Prostate gland (tissue), 2 donors: ENCODE measurements at regions of chr10 and their contacts with region 1.

Region 1: GRCh38 chr10:103416436-103417147 is 20.2 kb downstream of the PDCD11 start:
- DNase-seq: peak; percentile 62
- H3K4me3 ChIP-seq: no peak overlapping the region
- H3K27ac ChIP-seq: no peak overlapping the region
- H3K4me1 ChIP-seq: no peaks in the 10 kb centered on the region
- H3K27me3 ChIP-seq: no peaks in the 10 kb centered on the region
- CTCF ChIP-seq: peak in 3 of 4 experiments; percentile 65 to 74 (median 73)
- POLR2A ChIP-seq: no peak

Region 2: DNA sequence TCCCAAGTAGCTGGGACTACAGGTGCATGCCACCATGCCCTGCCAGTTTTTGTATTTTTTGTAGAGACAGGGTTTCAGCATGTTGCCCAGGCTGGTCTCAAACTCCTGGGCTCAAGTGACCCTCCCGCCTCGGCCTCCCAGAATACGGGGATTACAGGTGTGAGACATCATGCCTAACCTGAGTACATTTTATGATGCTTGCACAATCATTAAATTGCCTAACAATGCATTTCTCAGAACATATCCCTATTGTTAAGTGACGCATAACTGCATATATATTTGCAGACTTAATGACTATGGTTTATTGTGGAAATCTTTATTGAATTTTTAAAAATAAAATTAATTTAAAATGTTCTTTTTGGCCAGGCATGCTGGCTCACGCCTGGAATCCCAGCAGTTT is 109.0 kb before region 1 on chr10:
- intact Hi-C with region 1: no loop called
- DNase-seq: no peak
- H3K4me3 ChIP-seq: no peak overlapping the region
- H3K27ac ChIP-seq: no peak overlapping the region
- H3K4me1 ChIP-seq: no peaks in the 10 kb centered on the region
- H3K27me3 ChIP-seq: no peaks in the 10 kb centered on the region
- CTCF ChIP-seq: no peak
- POLR2A ChIP-seq: no peak

Region 3: DNA sequence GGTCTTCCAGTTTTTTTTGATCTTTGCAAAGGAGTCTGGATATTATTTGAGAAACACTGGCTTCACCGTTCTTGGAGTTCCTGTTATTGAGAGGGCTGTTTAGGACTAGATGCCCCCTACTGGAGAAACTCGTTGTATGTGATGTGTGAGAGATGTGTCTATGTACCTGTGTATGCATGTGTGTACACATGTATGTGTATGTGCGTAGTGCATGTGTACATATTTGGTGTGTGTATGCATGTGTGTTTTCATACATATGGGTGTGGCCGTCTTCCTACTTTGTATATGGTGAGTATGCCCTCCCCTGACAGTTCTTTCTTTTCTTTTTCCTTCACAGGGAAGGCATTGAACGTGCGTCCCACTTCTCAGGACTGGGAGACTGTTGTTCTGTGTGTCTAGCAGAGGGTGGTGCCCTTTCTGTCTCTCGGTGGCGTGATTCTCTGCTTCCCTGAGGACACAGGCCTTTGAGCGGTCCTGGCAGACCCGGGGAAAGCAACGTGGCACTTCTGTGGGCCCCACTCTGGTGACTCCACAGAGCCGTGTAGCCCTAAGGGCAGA is 65.5 kb after region 1 on chr10:
- intact Hi-C with region 1: loop called (anchors 1 kb)
- DNase-seq: peak; percentile 36
- H3K4me3 ChIP-seq: no peak overlapping the region
- H3K27ac ChIP-seq: no peak overlapping the region
- H3K4me1 ChIP-seq: no peaks in the 10 kb centered on the region
- H3K27me3 ChIP-seq: no peaks in the 10 kb centered on the region
- CTCF ChIP-seq: peak in 3 of 4 experiments; percentile 35 to 59 (median 47)
- POLR2A ChIP-seq: no peak

Region 4: GRCh38 chr10:103534581-103535508 is 118.3 kb after region 1 on chr10:
- intact Hi-C with region 1: no loop called
- DNase-seq: no peak
- H3K4me3 ChIP-seq: no peak overlapping the region
- H3K27ac ChIP-seq: no peak overlapping the region
- H3K4me1 ChIP-seq: no peaks in the 10 kb centered on the region
- H3K27me3 ChIP-seq: no peaks in the 10 kb centered on the region
- CTCF ChIP-seq: no peak
- POLR2A ChIP-seq: no peak

Region 5: GRCh38 chr10:103592186-103593021 is 175.8 kb after region 1 on chr10:
- intact Hi-C with region 1: loop called (anchors 5 kb)
- DNase-seq: no peak
- H3K4me3 ChIP-seq: no peak overlapping the region
- H3K27ac ChIP-seq: no peak overlapping the region
- H3K4me1 ChIP-seq: no peaks in the 10 kb centered on the region
- H3K27me3 ChIP-seq: no peaks in the 10 kb centered on the region
- CTCF ChIP-seq: peak; percentile 17 to 50 (median 39)
- POLR2A ChIP-seq: no peak